ENCODE measurements at regions of chr7 and their contacts with region 1.

Region 1: DNA sequence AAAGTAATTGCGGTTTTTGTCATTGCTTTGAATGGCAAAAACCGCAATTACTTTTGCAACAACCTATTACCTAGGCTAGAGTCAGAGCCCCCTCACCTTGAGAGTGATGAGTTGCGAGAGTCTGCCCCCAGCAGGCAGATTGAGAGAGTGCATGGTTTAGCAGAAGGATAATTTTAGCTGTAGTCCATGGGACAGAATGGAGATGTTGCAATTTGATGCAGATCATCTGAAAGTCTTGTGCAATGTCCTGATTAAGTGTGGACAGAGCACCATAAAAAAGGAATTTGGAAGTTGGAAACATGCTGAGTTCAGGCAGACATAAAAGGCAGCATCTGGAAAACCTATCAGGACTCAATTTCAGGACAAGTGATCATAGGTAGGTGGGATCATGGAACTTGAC is 48.7 kb downstream of the GPR141 start:
- H3K4me3 ChIP-seq: no peak overlapping the region
- H3K27ac ChIP-seq: no peak overlapping the region
- H3K4me1 ChIP-seq: no peaks in the 10 kb centered on the region
- CTCF ChIP-seq: peak; percentile 46; the same call in 1 of the 2 replicates

Region 2: GRCh38 chr7:37265006-37265405 is 467.2 kb before region 1 on chr7:
- CTCF ChIA-PET with region 1: interaction called, 11 read pairs
- POLR2A ChIA-PET with region 1: no interaction called
- H3K4me3 ChIP-seq: no peak overlapping the region
- H3K27ac ChIP-seq: no peak overlapping the region
- H3K4me1 ChIP-seq: no peaks in the 10 kb centered on the region
- CTCF ChIP-seq: no peak

Measured in HEK293 (cell line).